ENCODE measurements at regions of chr6 and their contacts with region 1.

Region 1: GRCh38 chr6:34595332-34596184 is 39.4 kb upstream of the SPDEF start:
- DNase-seq: no peak
- H3K4me3 ChIP-seq: no peak overlapping the region
- H3K27ac ChIP-seq: no peak overlapping the region
- H3K4me1 ChIP-seq: peaks cover 13% of the 10 kb centered on the region
- CTCF ChIP-seq: no peak

Region 2: GRCh38 chr6:34161857-34162515 is 433.6 kb before region 1 on chr6:
- CTCF ChIA-PET with region 1: no interaction called
- POLR2A ChIA-PET with region 1: no interaction called
- intact Hi-C with region 1: loop called (anchors 10 kb)
- DNase-seq: no peak
- H3K4me3 ChIP-seq: no peak overlapping the region
- H3K27ac ChIP-seq: no peak overlapping the region
- H3K4me1 ChIP-seq: no peaks in the 10 kb centered on the region
- CTCF ChIP-seq: no peak

Region 3: DNA sequence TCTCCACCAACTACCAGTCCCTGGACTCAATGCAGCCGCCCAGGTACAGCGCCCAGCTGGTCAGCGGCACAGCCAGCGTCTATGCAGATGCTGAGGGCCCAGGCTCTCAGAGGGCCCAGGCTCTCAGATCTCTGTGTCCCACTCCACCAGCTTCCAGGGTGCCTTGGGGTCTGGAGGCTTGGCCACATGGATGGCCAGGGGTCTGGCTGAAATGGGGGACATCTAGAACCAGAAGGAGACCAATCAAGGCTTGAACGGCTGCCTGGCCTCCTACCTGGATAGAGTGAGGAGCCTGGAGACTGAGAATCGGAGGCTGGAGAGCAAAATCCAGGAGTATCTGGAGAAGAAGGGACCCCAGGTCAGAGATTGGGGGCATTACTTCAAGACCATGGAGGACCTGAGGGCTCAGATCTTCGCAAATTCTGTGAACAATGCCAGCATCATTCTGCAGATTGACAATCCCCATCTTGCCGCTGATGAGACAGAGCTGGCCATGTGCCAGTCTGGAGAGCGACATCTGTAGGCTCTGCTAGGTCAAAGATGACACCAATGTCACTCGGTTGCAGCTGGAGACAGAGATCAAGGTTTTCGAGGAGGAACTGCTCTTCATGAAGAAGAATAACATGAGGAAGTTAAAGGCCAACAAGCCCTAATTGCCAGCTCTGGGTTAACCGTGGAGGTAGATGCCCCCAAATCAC is 405.6 kb before region 1 on chr6:
- CTCF ChIA-PET with region 1: no interaction called
- POLR2A ChIA-PET with region 1: no interaction called
- intact Hi-C with region 1: no loop called
- DNase-seq: peak; percentile 68
- H3K4me3 ChIP-seq: no peak overlapping the region
- H3K27ac ChIP-seq: no peak overlapping the region
- H3K4me1 ChIP-seq: no peaks in the 10 kb centered on the region
- CTCF ChIP-seq: peak; percentile 64